Activated T-helper 2 cell treated with anti-CD3 and anti-CD28 coated beads, Interferon-gamma antibody, Interleukin-2, Interleukin-4, amounts not matched to agents 10 μg/mL and 5 μg/mL and 100 μg/mL, durations not matched to agents 14 hours and 24 hours and 36 hours (primary cell): ENCODE measurements at regions of chr18 and their contacts with region 1.

Region 1: GRCh38 chr18:63161761-63162195 is 157.8 kb downstream of the BCL2 start:
- DNase-seq: peak; percentile 80
- H3K4me3 Mint-ChIP-seq: peak overlapping the region; percentile 71
- H3K27ac Mint-ChIP-seq: peak overlapping the region; percentile 99
- H3K4me1 Mint-ChIP-seq: peaks cover 86% of the 10 kb centered on the region
- H3K27me3 Mint-ChIP-seq: no peaks in the 10 kb centered on the region

Region 2: GRCh38 chr18:63105636-63106316 is 56.0 kb before region 1 on chr18:
- intact Hi-C with region 1: loop called (anchors 1 kb)
- DNase-seq: no peak
- H3K4me3 Mint-ChIP-seq: no peak overlapping the region
- H3K27ac Mint-ChIP-seq: no peak overlapping the region
- H3K4me1 Mint-ChIP-seq: peaks cover 61% of the 10 kb centered on the region
- H3K27me3 Mint-ChIP-seq: peaks cover 5% of the 10 kb centered on the region

Region 3: GRCh38 chr18:63131106-63131958 is 30.4 kb before region 1 on chr18:
- intact Hi-C with region 1: no loop called
- DNase-seq: no peak
- H3K4me3 Mint-ChIP-seq: no peak overlapping the region
- H3K27ac Mint-ChIP-seq: no peak overlapping the region
- H3K4me1 Mint-ChIP-seq: peaks cover 37% of the 10 kb centered on the region
- H3K27me3 Mint-ChIP-seq: no peaks in the 10 kb centered on the region

Region 4: DNA sequence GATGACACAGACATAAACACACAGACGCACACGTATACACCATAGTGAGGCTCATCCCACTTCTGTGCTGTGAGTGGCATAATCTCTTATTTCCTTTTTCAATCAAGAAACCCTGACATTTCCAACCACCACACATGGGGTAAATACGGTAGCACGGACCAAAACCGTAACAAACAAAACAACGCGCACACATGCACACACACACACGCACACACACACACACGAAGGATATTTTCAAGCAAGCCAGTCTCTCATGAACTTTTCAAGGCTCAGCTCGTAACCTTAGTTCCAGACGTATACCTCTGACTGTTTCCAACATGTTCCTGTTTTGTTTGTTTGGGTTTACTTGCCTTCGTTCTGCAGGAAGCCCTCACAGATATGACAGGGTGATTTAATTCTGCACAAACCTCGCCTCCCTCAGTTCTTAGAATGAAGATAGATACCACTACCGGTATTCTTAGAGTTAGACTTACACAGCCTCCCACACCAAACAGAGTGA is 38.0 kb after region 1 on chr18:
- intact Hi-C with region 1: loop called (anchors 1 kb)
- DNase-seq: peak; percentile 56
- H3K4me3 Mint-ChIP-seq: no peak overlapping the region
- H3K27ac Mint-ChIP-seq: no peak overlapping the region
- H3K4me1 Mint-ChIP-seq: peaks cover 30% of the 10 kb centered on the region
- H3K27me3 Mint-ChIP-seq: no peaks in the 10 kb centered on the region

Region 5: DNA sequence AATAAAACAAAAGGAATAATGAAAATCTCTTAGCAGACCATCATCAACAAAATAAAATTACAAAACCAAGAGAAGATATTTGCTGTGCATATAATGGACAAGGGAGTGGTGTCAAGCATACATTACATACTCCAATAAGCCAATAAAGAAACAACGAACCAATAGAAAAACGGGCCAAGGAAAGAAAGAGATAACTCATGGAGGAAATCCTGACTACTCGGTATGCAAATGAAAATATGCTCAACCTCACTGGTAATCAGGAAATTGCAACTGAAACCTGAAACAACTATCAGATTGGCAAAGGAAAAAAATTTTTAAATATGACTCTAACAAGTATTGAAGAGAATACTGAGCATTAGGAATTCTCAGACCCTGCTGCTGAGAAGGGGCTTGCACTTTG is 73.1 kb after region 1 on chr18:
- intact Hi-C with region 1: loop called (anchors 1 kb)
- DNase-seq: no peak
- H3K4me3 Mint-ChIP-seq: peak overlapping the region; percentile 17
- H3K27ac Mint-ChIP-seq: peak overlapping the region; percentile 80
- H3K4me1 Mint-ChIP-seq: peaks cover 71% of the 10 kb centered on the region
- H3K27me3 Mint-ChIP-seq: no peaks in the 10 kb centered on the region

Region 6: DNA sequence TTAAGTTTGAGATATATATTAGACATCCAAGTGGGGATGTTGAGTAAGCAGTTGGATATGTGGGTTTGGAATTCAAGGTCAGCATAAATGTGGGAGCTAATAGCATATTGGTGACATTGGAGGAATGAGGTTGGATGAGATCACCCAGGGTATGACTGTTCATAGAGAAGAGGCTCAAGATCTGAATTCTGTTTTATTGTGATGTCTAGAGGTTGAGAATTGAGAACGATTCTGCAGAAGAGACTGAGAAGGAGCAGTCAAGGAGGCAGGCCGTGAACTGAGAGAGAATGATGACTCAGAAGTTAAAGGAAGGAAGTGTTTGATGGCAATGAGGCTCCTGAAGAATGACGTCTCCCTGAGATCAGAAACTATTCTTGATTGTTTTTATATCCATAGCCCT is 546.9 kb after region 1 on chr18:
- intact Hi-C with region 1: no loop called
- DNase-seq: no peak
- H3K4me3 Mint-ChIP-seq: no peak overlapping the region
- H3K27ac Mint-ChIP-seq: no peak overlapping the region
- H3K4me1 Mint-ChIP-seq: no peaks in the 10 kb centered on the region
- H3K27me3 Mint-ChIP-seq: no peaks in the 10 kb centered on the region